GM12878 (cell line): ENCODE measurements at regions of chr19 and their contacts with region 1.

Region 1: GRCh38 chr19:39412100-39412866 is at the start of gene PLEKHG2:
- DNase-seq: peak; percentile 99
- ATAC-seq: peak; percentile 59
- H3K4me3 ChIP-seq: peak within 1 kb of the TSS; percentile 98
- H3K27ac ChIP-seq: peak within 1 kb of the TSS; percentile 100
- H3K4me1 ChIP-seq: peaks cover 15% of the 10 kb centered on the region
- H3K27me3 ChIP-seq: no peaks in the 10 kb centered on the region
- CTCF ChIP-seq: peak in 2 of 3 experiments; percentile 79 to 90
- EP300 ChIP-seq: peak; percentile 26 to 31; a peak in 2 of 4 replicates
- POLR2A ChIP-seq: peak; percentile 87
- RAD21 ChIP-seq: peak; percentile 44
- polyA plus RNA-seq, gene PLEKHG2: 3.0 to 7.2 TPM

Region 2: GRCh38 chr19:37716140-37716539 is 1696.1 kb before region 1 on chr19:
- CTCF ChIA-PET with region 1: no interaction called
- POLR2A ChIA-PET with region 1: no interaction called
- RAD21 ChIA-PET with region 1: no interaction called
- SMC1A ChIA-PET with region 1: no interaction called
- in situ Hi-C with region 1: no loop called
- intact Hi-C with region 1: no loop called
- DNase-seq: no peak
- ATAC-seq: no peak
- H3K4me3 ChIP-seq: no peak overlapping the region
- H3K27ac ChIP-seq: no peak overlapping the region
- H3K4me1 ChIP-seq: no peaks in the 10 kb centered on the region
- H3K27me3 ChIP-seq: no peaks in the 10 kb centered on the region
- CTCF ChIP-seq: no peak
- EP300 ChIP-seq: no peak
- POLR2A ChIP-seq: no peak
- RAD21 ChIP-seq: no peak

Region 3: DNA sequence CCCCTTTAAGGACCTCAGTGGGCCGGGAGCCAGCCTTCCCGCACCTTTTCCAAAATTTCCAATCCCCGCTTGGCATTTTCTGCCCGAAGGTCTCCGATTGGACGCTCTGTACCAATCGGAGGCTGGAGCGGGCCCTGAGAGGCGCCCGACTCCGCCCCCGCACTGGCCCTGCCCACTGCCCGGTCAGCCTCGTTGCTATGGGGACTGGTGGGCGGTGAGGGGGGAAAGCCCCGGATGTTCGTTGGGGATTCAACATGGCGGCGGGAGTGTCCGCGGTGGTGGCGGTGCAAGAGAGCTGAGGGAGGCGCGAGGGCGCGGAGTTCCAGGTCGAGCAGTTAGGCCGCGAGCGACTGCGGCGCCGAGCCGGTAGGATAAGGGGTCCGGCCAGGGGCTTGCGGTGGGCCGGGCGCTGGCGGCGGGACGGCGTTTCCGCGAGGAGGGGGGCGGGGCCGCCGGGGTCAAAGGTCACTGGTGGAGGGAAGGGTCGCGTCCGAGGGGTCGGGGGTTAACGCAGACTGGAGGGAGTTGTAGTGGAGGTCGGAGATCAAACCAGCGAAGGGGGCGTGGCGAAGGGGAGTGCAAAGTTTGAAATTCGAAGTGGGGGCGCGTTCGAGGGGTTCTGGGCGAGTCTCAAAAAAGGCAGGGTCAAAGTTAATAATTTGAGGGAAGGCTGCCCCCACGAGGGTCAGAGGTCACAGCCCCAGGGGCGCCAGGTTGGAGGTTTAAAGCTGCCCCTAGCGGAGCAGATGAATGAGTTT is 286.6 kb before region 1 on chr19 and contains the start of gene PAK4:
- CTCF ChIA-PET with region 1: interaction called, 6 read pairs
- POLR2A ChIA-PET with region 1: no interaction called
- RAD21 ChIA-PET with region 1: interaction called, 8 read pairs
- SMC1A ChIA-PET with region 1: interaction called, 3 read pairs
- in situ Hi-C with region 1: loop called (anchors 5 kb)
- intact Hi-C with region 1: loop called (anchors 1 kb)
- DNase-seq: peak; percentile 82
- ATAC-seq: peak; percentile 98
- H3K4me3 ChIP-seq: peak within 1 kb of the TSS; percentile 87
- H3K27ac ChIP-seq: peak within 1 kb of the TSS; percentile 64
- H3K4me1 ChIP-seq: peaks cover under 1% of the 10 kb centered on the region; the same call in 1 of the 2 replicates
- H3K27me3 ChIP-seq: no peaks in the 10 kb centered on the region
- CTCF ChIP-seq: no peak
- EP300 ChIP-seq: no peak
- POLR2A ChIP-seq: peak; percentile 92
- RAD21 ChIP-seq: no peak
- polyA plus RNA-seq, gene PAK4: 0.08 to 0.37 TPM

Region 4: DNA sequence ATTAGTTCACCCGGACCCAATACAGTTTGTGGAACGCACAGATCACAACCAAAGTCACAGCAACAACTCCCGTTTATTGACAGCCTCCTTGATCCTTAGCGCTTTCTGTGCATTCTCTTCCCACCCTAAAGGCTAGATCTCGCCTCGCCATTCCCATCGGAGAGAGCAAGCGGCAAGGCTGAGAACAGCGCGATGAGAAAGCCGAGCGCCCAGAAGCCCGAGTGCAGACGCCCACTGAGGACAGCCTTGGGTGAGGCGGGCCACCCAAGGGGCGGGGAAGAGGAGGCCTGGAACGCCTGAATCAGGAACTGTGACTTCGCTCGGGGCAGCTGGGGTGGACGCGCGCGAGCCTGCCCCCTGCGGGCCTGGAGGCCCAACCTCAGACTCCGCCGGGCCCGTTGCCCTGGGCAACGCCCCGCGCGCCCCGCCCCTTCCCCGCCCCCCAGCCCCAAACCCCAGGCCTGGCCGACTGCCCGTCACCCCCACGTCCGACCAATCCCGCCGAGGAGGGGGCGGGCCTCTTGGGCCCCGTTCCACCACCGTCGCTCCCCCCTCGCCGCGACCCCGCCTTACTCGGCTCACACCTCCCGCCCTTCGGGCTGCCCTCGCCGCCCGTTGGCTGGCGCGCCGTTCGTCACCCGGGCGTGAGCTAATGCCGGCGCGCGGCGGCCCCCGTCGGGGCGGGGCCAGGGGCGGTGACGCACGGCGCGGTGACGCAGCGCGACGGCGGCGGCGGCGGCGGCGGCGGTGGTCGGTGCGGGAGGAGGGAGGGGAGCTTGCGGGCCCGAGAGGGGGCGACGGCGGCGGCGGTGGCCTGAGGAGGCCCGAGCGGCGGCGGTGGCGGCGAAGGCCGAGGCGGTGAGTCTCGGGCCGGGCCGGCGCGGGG is 70.3 kb before region 1 on chr19 and contains the start of gene SAMD4B:
- CTCF ChIA-PET with region 1: interaction called, 5 read pairs
- POLR2A ChIA-PET with region 1: interaction called, 5 read pairs
- RAD21 ChIA-PET with region 1: interaction called, 6 read pairs
- SMC1A ChIA-PET with region 1: interaction called, 4 read pairs
- in situ Hi-C with region 1: no loop called
- intact Hi-C with region 1: loop called (anchors 1 kb)
- DNase-seq: peak; percentile 87
- ATAC-seq: peak; percentile 96
- H3K4me3 ChIP-seq: peak within 1 kb of the TSS; percentile 95
- H3K27ac ChIP-seq: peak within 1 kb of the TSS; percentile 82
- H3K4me1 ChIP-seq: peaks cover 14% of the 10 kb centered on the region
- H3K27me3 ChIP-seq: no peaks in the 10 kb centered on the region
- CTCF ChIP-seq: peak; percentile 57 to 91 (median 65); a peak in 5 of 6 replicates
- EP300 ChIP-seq: no peak
- POLR2A ChIP-seq: peak; percentile 99
- RAD21 ChIP-seq: peak; percentile 2; the same call in 1 of the 2 replicates
- polyA plus RNA-seq, gene SAMD4B: 2.4 to 3.8 TPM

Region 5: DNA sequence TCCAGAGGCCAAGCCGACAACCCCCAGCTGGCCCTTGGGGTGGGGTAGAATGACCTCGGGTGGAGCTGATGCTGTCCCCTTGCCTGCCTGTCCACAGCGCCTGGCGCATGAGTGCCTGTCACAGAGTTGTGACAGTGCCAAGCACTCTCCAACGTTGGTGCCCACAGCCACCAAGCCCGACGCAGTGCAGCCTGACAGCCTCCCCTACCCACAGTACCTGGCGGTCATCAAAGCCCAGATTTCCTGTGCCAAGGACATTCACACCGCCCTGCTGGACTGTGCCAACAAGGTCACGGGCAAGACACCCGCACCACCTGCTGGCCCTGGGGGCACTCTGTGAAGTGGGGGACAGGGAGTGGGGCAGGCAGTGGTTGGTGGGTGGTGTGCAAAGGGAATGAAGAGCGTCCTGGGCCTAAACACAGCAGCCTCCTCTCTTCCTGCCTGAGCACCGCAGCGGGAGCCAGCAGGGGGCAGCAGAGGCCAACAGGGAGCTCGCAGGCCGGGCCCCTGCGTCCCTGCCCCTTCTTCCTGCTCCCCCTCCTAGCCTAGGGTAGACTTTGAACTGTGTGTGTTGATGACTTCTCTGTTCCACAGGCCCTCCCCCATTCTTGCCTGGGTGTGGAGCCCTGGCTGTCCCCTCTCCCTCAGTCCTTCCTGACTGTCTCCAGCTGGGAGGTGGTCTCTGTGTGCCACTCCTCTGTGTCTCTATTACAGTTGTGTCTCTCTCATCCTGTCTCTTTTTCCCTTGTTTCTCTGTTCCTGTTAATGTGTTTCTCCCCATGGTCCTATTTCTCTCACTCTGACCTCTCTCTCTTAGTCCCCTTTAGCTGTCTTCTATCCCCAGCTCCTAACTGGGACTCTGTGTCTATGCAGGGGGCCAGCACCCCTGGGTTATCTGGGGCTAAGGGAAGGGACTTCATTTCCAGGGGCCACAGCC is 14.7 kb before region 1 on chr19:
- CTCF ChIA-PET with region 1: interaction called, 218 read pairs
- POLR2A ChIA-PET with region 1: interaction called, 40 read pairs
- RAD21 ChIA-PET with region 1: interaction called, 159 read pairs
- SMC1A ChIA-PET with region 1: interaction called, 146 read pairs
- in situ Hi-C with region 1: no loop called
- intact Hi-C with region 1: loop called (anchors 1 kb)
- DNase-seq: no peak
- ATAC-seq: peak; percentile 78
- H3K4me3 ChIP-seq: peak overlapping the region; percentile 26
- H3K27ac ChIP-seq: peak overlapping the region; percentile 99
- H3K4me1 ChIP-seq: peaks cover 54% of the 10 kb centered on the region
- H3K27me3 ChIP-seq: no peaks in the 10 kb centered on the region
- CTCF ChIP-seq: peak; percentile 97 to 98 (median 98); a peak in 5 of 6 replicates
- EP300 ChIP-seq: peak in 1 of 2 experiments; percentile 4; a peak in 1 of 4 replicates
- POLR2A ChIP-seq: no peak; the same call in 1 of the 2 replicates
- RAD21 ChIP-seq: peak; percentile 94

Region 6: GRCh38 chr19:39509233-39509632 is 97.0 kb after region 1 on chr19:
- CTCF ChIA-PET with region 1: no interaction called
- POLR2A ChIA-PET with region 1: no interaction called
- RAD21 ChIA-PET with region 1: no interaction called
- SMC1A ChIA-PET with region 1: no interaction called
- in situ Hi-C with region 1: no loop called
- intact Hi-C with region 1: no loop called
- DNase-seq: no peak
- ATAC-seq: no peak
- H3K4me3 ChIP-seq: no peak overlapping the region
- H3K27ac ChIP-seq: no peak overlapping the region
- H3K4me1 ChIP-seq: peaks cover 8% of the 10 kb centered on the region; the same call in 1 of the 2 replicates
- H3K27me3 ChIP-seq: peaks cover 0 to 4% of the 10 kb centered on the region in 2 experiments; a peak in 2 of 4 replicates
- CTCF ChIP-seq: no peak
- EP300 ChIP-seq: no peak
- POLR2A ChIP-seq: no peak
- RAD21 ChIP-seq: no peak

Region 7: GRCh38 chr19:39524495-39524894 is 112.2 kb after region 1 on chr19:
- CTCF ChIA-PET with region 1: no interaction called
- POLR2A ChIA-PET with region 1: no interaction called
- RAD21 ChIA-PET with region 1: no interaction called
- SMC1A ChIA-PET with region 1: no interaction called
- in situ Hi-C with region 1: no loop called
- intact Hi-C with region 1: no loop called
- DNase-seq: no peak
- ATAC-seq: peak; percentile 77
- H3K4me3 ChIP-seq: no peak overlapping the region
- H3K27ac ChIP-seq: no peak overlapping the region
- H3K4me1 ChIP-seq: no peaks in the 10 kb centered on the region
- H3K27me3 ChIP-seq: no peaks in the 10 kb centered on the region
- CTCF ChIP-seq: no peak
- EP300 ChIP-seq: no peak
- POLR2A ChIP-seq: no peak
- RAD21 ChIP-seq: no peak